ENCODE measurements at regions of chr6 and their contacts with region 1.

Region 1: GRCh38 chr6:3990692-3991501 is 88.0 kb downstream of the FAM217A start:
- DNase-seq: peak; percentile 84 to 89 (median 88)
- H3K4me3 ChIP-seq: peak overlapping the region; percentile 27
- H3K27ac ChIP-seq: peak overlapping the region in 1 of 2 donors; percentile 29
- H3K4me1 ChIP-seq: peaks cover 4% of the 10 kb centered on the region
- H3K27me3 ChIP-seq: no peaks in the 10 kb centered on the region
- CTCF ChIP-seq: peak; percentile 52 to 74 (median 69)
- EP300 ChIP-seq: no peak
- POLR2A ChIP-seq: no peak

Region 2: DNA sequence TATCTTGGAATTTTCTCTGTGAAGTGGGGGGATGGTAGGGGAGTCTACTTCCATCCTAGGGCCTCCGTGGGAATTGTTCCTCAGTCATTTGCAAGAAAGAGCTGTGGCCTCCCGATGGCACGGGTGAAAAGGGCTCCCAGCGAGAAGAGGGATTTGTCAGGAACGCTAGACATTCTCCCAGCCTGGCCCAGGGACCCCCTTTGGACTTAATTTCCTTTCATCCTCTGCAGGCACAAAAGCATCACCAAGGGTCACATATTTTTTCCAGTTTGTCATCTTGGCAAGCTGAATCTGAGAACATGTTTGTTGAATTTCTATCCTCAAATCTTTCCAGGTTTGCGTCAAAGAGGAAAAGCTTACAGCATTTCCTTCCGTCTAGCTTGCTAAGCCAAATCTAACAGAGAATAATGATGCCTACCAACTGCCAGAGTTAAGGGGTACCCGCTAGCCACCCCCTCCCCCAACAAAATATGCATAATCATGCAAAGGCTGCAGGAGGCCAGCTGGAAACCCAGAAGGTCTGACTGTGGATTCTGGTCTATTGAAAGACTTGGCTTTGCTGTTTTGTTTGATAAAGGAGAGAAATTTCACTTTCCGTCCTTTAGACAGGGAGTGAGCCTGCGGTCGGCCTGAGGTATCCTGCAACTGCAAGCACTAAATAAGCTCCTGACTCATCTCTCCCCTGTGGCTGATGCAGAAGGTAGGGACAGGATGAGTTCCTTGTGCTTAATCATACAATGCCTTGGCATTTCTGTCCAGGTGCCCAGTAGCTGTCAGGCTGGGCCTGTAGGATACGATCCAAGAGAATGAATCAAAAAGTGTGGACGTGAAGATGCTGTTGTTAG is 709.0 kb before region 1 on chr6:
- intact Hi-C with region 1: loop called in 3 of 4 experiments (anchors 5 to 10 kb)
- DNase-seq: peak in 4 of 5 donors; percentile 14 to 37 (median 24)
- H3K4me3 ChIP-seq: no peak overlapping the region
- H3K27ac ChIP-seq: no peak overlapping the region
- H3K4me1 ChIP-seq: no peaks in the 10 kb centered on the region
- H3K27me3 ChIP-seq: no peaks in the 10 kb centered on the region
- CTCF ChIP-seq: no peak
- EP300 ChIP-seq: no peak
- POLR2A ChIP-seq: no peak

Region 3: GRCh38 chr6:3848925-3849605 is 141.8 kb before region 1 on chr6 and contains the start of gene FAM50B:
- intact Hi-C with region 1: loop called in 1 of 4 experiments (anchors 10 kb)
- DNase-seq: peak; percentile 91 to 97 (median 95)
- H3K4me3 ChIP-seq: peak within 1 kb of the TSS; percentile 49
- H3K27ac ChIP-seq: peak within 1 kb of the TSS in 1 of 2 donors; percentile 12
- H3K4me1 ChIP-seq: peaks cover 6% of the 10 kb centered on the region
- H3K27me3 ChIP-seq: no peaks in the 10 kb centered on the region
- CTCF ChIP-seq: peak; percentile 77 to 98 (median 95)
- EP300 ChIP-seq: no peak
- POLR2A ChIP-seq: peak; percentile 27
- total RNA-seq, gene FAM50B: 11.5 to 23.0 (median 15.6) TPM

Region 4: GRCh38 chr6:4018172-4018905 is 27.4 kb after region 1 on chr6:
- intact Hi-C with region 1: no loop called
- DNase-seq: peak; percentile 95 to 96 (median 96)
- H3K4me3 ChIP-seq: peak overlapping the region; percentile 78
- H3K27ac ChIP-seq: peak overlapping the region; percentile 91 to 95
- H3K4me1 ChIP-seq: peaks cover 3% of the 10 kb centered on the region
- H3K27me3 ChIP-seq: no peaks in the 10 kb centered on the region
- CTCF ChIP-seq: peak in 2 of 3 donors; percentile 67 to 74
- EP300 ChIP-seq: no peak
- POLR2A ChIP-seq: peak; percentile 90

Measured in ovary (tissue), 10 donors.